ENCODE measurements at regions of chr17 and their contacts with region 1.

Region 1: GRCh38 chr17:1122533-1123392 is 57.0 kb downstream of the ABR start:
- DNase-seq: peak; percentile 88
- ATAC-seq: peak; percentile 89
- H3K4me3 ChIP-seq: no peak overlapping the region
- H3K27ac ChIP-seq: peak overlapping the region; percentile 14
- H3K4me1 ChIP-seq: peaks cover 18% of the 10 kb centered on the region
- H3K27me3 ChIP-seq: no peaks in the 10 kb centered on the region
- CTCF ChIP-seq: peak; percentile 86

Region 2: DNA sequence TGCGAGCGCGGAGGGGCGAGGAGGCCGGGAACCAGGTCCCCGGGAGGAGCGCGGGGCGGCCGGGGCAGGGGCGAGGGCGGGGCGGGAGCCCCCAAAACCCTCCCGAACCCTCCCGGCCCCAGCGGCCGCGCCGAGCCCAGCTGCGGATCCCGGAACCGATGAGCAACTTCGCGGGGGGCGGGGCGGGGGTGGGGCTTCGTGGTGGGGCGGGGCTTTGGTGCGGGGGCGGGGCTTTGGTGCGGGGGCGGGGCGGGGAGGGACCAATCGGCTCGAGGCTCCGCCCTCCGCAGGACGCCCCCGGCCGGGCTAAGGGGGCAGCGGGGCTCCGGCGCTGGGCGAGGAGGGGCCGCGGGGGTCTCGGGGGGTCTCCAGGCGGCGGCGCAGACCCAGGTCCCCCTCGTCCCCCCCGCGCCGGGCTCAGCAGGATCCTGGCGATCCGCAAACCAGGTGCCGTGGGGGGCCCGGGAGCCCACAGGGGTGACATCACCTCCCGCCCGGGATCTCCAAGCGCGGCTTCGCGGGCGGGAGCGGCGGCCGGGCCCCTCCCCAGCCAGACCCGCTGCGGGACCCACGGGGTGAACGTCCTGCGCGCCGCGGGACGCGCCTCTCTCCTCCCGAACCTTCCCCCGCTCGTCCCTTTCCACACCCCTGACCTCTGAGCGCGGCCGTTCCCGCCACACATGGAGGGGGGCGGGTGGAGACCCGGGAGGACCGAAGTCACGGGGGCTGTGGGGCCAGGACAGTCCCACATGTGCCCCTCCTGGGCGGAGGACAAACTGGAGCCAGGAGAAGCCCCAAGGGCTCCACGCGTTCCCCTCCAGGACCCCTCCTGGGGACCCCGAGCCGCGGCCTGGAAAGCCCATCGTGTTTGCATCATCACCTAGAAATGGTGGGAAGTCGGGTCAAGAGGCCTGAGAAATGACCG is 57.3 kb after region 1 on chr17 and contains the start of gene ABR:
- intact Hi-C with region 1: loop called (anchors 5 kb)
- DNase-seq: peak; percentile 83
- ATAC-seq: peak; percentile 76
- H3K4me3 ChIP-seq: peak within 1 kb of the TSS; percentile 76
- H3K27ac ChIP-seq: peak within 1 kb of the TSS; percentile 58
- H3K4me1 ChIP-seq: peaks cover 37% of the 10 kb centered on the region
- H3K27me3 ChIP-seq: no peaks in the 10 kb centered on the region
- CTCF ChIP-seq: no peak
- total RNA-seq, gene ABR: 185 TPM